ENCODE measurements at regions of chr11 and their contacts with region 1.

Region 1: DNA sequence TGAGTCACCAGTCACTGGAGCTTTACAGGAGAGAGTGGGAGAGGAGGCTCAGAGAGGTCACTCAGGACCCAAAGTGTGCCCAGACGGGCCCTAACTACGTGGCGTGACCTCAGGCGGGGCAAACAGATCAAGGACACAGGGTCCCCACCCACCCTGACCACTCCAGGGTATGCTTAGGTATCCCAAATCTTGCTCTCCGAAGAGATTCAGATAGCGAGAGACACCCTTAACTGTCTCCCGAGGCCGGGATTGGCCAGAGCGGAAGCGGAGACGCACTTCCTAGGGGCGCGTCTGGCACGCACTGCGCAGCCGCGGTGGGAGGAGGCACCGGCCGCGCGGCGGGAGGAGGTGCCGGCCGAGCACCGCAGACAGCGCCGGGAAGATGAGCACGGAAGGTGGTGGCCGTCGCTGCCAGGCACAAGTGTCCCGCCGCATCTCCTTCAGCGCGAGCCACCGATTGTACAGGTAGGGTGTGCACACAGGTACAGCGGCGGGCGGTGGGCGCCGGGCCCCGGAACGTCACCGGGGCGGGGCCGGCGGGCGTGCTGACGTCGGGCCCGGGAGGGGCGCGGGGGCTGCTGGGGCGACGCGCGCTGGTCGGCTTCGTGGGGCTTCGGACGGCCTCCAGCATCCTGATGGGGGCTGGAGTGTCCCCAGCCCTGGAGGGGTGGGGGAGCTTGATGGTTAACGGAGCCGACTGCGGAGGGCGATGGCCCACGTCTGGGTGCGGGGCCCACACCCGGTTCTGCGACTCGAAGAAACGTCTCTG is at the start of gene PTS:
- DNase-seq: no peak
- H3K4me3 ChIP-seq: peak within 1 kb of the TSS; percentile 62
- H3K27me3 ChIP-seq: no peaks in the 10 kb centered on the region
- CTCF ChIP-seq: no peak
- polyA plus RNA-seq, gene PTS: 21.3 and 53.4 TPM in 2 replicates

Region 2: DNA sequence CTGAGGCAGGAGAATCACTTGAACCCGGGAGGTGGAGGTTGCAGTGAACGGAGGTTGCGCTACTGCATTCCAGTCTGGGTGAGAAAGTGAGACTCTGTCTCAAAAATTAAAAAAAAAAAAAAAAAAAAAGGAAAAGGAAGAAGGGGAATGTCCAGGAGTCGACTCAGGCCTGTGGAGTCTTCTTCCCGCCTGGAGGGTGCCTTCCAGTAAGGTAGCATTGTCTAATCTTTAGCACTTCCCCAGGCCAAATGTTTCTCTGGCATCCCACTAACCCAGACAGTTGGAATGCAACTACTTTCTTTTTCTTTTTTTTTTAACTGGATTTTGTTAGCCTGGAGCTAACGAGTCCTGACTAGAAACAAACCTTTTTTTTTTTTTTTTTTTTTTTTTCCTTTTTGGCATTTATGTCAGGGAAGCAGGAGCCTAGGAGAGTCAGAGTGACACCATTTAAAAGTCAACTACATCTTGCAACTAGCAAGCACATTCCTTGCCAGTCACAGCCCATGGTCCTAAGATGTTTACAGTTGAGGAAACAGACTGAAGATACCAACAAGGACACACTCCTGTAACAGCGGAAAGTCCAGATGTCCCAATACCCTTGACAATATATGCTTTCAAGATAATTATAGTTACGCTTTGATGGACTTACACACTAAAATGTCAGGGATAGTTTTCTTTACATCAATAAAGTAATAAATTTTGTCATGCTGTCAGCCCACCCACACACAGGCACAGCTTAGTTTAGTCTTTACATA is 23.8 kb after region 1 on chr11:
- CTCF ChIA-PET with region 1: interaction called, 5 read pairs
- POLR2A ChIA-PET with region 1: interaction called, 18 read pairs
- DNase-seq: no peak
- H3K4me3 ChIP-seq: no peak overlapping the region
- H3K27me3 ChIP-seq: no peaks in the 10 kb centered on the region
- CTCF ChIP-seq: no peak

Region 3: GRCh38 chr11:112334381-112334780 is 108.1 kb after region 1 on chr11:
- CTCF ChIA-PET with region 1: no interaction called
- POLR2A ChIA-PET with region 1: no interaction called
- DNase-seq: no peak
- H3K4me3 ChIP-seq: no peak overlapping the region
- H3K27me3 ChIP-seq: peaks cover 2% of the 10 kb centered on the region; the same call in 1 of the 2 replicates
- CTCF ChIP-seq: no peak

Region 4: GRCh38 chr11:112364962-112365481 is 138.8 kb after region 1 on chr11:
- CTCF ChIA-PET with region 1: no interaction called
- POLR2A ChIA-PET with region 1: interaction called, 10 read pairs
- DNase-seq: peak; percentile 88
- H3K4me3 ChIP-seq: no peak overlapping the region
- H3K27me3 ChIP-seq: no peaks in the 10 kb centered on the region
- CTCF ChIP-seq: no peak